Esophagus squamous epithelium (tissue), 5 donors: ENCODE measurements at regions of chr17 and their contacts with region 1.

Region 1: GRCh38 chr17:6019959-6020358 is 50.2 kb upstream of the WSCD1 start:
- DNase-seq: no peak
- H3K4me3 ChIP-seq: no peak overlapping the region
- H3K27ac ChIP-seq: no peak overlapping the region
- H3K4me1 ChIP-seq: no peaks in the 10 kb centered on the region
- H3K27me3 ChIP-seq: peaks cover 0 to 33% (median 0%) of the 10 kb centered on the region in 4 donors
- CTCF ChIP-seq: no peak
- POLR2A ChIP-seq: no peak

Region 2: DNA sequence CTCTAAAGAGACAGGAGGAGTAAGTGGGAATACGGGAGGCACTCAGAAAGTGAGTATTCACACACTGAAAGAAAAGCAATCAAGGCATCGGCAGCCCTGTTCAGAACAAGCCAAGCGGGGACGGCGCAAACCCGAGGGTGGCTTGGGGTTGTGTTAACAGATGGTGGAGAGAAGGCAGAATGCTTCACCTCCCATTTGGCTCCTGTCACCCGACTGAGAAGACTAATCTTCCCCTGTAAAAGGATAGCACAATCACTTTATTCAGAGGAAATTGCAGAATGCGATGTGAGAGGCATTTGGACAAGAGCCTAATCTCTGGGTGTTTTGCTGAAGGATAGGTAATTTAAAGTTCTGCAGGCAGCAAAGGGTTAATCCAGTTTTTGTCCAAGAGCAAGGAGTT is 69.1 kb before region 1 on chr17:
- intact Hi-C with region 1: loop called (anchors 10 kb)
- DNase-seq: no peak
- H3K4me3 ChIP-seq: no peak overlapping the region
- H3K27ac ChIP-seq: no peak overlapping the region
- H3K4me1 ChIP-seq: no peaks in the 10 kb centered on the region
- H3K27me3 ChIP-seq: peaks cover 0 to 34% (median 0%) of the 10 kb centered on the region in 4 donors
- CTCF ChIP-seq: no peak
- POLR2A ChIP-seq: no peak